ENCODE measurements at regions of chrX and their contacts with region 1.

Region 1: GRCh38 chrX:130902783-130903613 is at the start of gene ENOX2:
- DNase-seq: peak; percentile 87 to 96
- H3K4me3 ChIP-seq: peak within 1 kb of the TSS; percentile 63 to 67
- H3K27ac ChIP-seq: peak within 1 kb of the TSS; percentile 83 to 85
- H3K4me1 ChIP-seq: no peaks in the 10 kb centered on the region
- H3K27me3 ChIP-seq: no peaks in the 10 kb centered on the region
- CTCF ChIP-seq: no peak
- total RNA-seq, gene ENOX2: 2.0 TPM

Region 2: DNA sequence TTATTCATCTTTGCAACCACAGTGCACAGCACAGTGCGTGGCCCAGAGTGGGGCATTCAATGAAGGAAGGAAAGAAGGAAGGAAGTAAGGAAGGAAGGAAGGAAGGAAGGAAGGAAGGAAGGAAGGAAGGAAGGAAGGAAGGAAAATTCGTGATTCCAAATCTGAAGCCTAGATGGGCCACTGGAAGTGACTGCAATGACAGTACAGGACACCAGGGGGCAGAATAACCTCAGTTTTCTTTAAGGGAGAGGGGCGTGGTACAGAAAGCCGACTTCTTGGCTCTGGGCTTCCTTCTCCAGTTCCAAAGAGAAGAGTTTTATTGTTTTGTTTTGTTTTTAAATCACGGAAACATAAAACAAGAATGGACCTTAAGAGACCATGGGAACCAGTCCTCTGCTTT is 1296.1 kb before region 1 on chrX:
- intact Hi-C with region 1: loop called (anchors 10 kb)
- DNase-seq: peak in 1 of 2 donors; percentile 70
- H3K4me3 ChIP-seq: no peak overlapping the region
- H3K27ac ChIP-seq: no peak overlapping the region
- H3K4me1 ChIP-seq: no peaks in the 10 kb centered on the region
- H3K27me3 ChIP-seq: no peaks in the 10 kb centered on the region
- CTCF ChIP-seq: peak; percentile 75 to 80 (median 77)

Region 3: DNA sequence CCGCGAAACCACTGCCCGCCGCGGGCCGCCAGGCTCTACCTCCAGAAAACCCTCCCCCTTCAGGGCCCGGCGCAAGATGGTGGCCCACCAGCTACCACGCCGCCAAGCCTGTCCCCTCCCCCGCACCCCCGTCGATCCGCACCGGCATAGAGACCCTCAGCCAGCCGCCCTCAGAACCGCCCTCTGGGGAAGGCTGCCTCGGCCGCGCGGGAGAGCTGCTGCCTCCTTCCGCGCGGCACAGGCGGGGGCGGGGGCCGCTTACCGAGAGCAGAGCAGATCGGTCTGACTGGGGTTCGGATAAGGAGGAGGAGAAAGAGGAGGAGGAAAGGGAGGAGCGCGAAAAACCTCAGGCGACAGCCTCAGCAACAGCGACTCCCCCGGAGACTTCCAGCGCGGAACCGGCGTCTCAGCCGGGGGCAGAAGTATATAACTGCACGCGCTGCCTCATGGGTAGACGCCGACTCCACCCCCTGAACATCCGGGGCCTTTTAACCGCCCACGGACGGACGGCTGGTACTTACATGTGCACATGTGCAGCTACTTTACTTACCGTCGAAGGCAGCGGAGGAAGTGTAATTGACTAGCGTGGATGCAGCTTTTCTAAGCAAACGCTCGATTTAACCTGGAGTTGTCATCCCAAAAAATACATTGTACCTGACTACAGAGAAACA is 634.4 kb before region 1 on chrX and contains the start of gene ZNF280C:
- intact Hi-C with region 1: loop called (anchors 2 kb)
- DNase-seq: peak; percentile 72 to 92
- H3K4me3 ChIP-seq: peak within 1 kb of the TSS; percentile 58 to 74
- H3K27ac ChIP-seq: peak within 1 kb of the TSS; percentile 83
- H3K4me1 ChIP-seq: no peaks in the 10 kb centered on the region
- H3K27me3 ChIP-seq: no peaks in the 10 kb centered on the region
- CTCF ChIP-seq: peak in 2 of 3 experiments; percentile 9 to 13
- total RNA-seq, gene ZNF280C: 5.0 TPM

Region 4: GRCh38 chrX:130401415-130402207 is 501.4 kb before region 1 on chrX and contains the start of gene RBMX2:
- intact Hi-C with region 1: loop called (anchors 5 kb)
- DNase-seq: peak; percentile 16 to 80
- H3K4me3 ChIP-seq: peak within 1 kb of the TSS; percentile 55 to 74
- H3K27ac ChIP-seq: peak within 1 kb of the TSS; percentile 82 to 87
- H3K4me1 ChIP-seq: peaks cover 0 to 2% of the 10 kb centered on the region in 2 donors
- H3K27me3 ChIP-seq: no peaks in the 10 kb centered on the region
- CTCF ChIP-seq: no peak
- total RNA-seq, gene RBMX2: 0.75 TPM

Region 5: DNA sequence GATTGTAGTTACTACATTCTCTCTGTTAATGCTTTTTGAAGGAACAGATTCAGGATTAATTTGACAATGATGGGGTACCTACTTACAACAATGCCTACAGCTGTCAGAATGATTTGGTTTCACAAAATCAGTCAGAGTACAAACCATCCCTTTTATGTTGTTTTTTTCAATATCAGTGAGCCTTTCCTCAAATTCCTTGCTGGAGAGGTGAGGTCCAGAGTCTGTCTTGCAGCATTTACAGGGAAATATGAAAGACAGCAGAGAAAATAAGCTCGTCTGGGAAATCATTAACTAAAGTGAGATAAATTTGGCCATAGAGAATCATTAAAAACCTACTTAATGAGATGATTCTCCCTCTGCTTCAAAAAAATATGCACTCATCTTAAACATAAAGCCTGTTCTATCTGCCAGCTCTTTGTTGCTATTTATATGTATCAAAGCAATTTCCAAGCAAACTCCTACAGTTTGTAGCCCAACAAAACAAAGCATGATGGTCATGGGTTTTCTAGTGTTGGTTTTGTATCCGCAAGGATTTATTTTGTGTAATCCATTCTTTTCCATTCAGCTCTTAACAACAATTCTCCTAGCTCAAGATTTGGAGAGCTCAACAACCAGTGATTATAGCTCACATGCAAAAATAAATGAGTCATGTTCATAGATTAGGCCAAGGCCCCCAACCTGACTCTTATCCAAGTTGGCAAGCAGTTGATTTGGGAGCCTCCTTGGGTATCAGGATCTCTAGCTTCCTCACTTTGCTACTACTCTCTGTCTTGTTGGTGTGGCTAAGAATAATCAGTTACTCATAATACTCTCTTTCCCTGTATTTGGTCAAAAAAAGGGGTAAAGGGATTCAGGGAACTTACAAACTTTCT is 222.6 kb before region 1 on chrX:
- intact Hi-C with region 1: loop called (anchors 5 kb)
- DNase-seq: no peak
- H3K4me3 ChIP-seq: no peak overlapping the region
- H3K27ac ChIP-seq: peak overlapping the region; percentile 68
- H3K4me1 ChIP-seq: peaks cover 0 to 3% of the 10 kb centered on the region in 2 donors
- H3K27me3 ChIP-seq: no peaks in the 10 kb centered on the region
- CTCF ChIP-seq: no peak

Region 6: DNA sequence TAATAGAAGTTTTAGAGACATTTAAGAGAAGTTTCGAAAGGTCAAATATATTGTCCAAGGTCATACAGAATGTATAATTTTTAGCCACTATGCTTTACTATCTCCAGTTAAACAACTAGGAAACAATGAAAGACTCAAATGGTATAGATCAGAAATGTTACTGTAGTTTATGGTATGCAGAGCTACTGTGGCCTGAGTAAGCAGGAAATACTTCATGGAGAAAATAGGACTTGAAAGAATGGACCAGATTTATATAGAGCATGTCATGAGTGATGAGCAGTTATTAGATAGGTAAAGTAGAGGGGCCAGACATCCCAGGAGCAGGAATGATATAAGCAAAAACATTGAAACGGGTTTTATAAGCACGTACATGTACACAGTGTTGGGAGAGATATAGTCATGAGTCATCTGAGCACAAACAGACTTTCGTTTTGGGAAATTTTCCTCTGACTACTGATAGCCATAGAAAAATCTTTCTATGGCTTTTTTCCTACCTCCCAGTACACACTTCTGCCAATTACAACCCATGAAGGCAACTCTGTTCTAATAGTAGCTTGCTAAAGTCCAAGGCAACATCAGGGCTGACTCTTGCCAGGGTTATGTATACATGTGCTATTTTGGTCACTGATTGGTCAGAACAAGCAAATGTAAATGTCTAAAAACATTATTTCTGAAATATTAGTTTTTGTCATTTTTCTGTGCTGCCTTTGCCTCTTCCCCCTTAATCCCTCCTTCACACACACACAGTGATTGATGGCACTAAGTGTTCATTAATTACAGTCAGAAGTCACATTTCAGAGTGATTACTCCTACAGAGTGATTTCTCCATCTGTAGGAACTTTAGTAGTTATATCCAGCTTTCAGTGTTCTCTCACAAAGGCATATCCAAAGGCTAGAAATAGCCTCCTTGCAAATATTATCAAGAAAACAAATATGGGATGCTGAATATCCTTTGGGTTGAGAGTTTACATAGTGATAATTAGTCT is 198.7 kb before region 1 on chrX:
- intact Hi-C with region 1: loop called (anchors 2 kb)
- DNase-seq: no peak
- H3K4me3 ChIP-seq: no peak overlapping the region
- H3K27ac ChIP-seq: peak overlapping the region; percentile 46 to 71
- H3K4me1 ChIP-seq: no peaks in the 10 kb centered on the region
- H3K27me3 ChIP-seq: no peaks in the 10 kb centered on the region
- CTCF ChIP-seq: no peak

Region 7: GRCh38 chrX:131082325-131082740 is 179.3 kb after region 1 on chrX:
- intact Hi-C with region 1: no loop called
- DNase-seq: no peak
- H3K4me3 ChIP-seq: no peak overlapping the region
- H3K27ac ChIP-seq: no peak overlapping the region
- H3K4me1 ChIP-seq: no peaks in the 10 kb centered on the region
- H3K27me3 ChIP-seq: no peaks in the 10 kb centered on the region
- CTCF ChIP-seq: no peak

Region 8: GRCh38 chrX:132219343-132219768 is 1316.4 kb after region 1 on chrX and contains the start of gene RAP2C:
- intact Hi-C with region 1: loop called (anchors 5 kb)
- DNase-seq: peak; percentile 33 to 84
- H3K4me3 ChIP-seq: peak within 1 kb of the TSS; percentile 53 to 69
- H3K27ac ChIP-seq: peak within 1 kb of the TSS; percentile 91 to 96
- H3K4me1 ChIP-seq: peaks cover 0 to 6% of the 10 kb centered on the region in 2 donors
- H3K27me3 ChIP-seq: no peaks in the 10 kb centered on the region
- CTCF ChIP-seq: peak; percentile 38 to 59 (median 51)
- total RNA-seq, gene RAP2C: 3.4 TPM